ENCODE measurements at regions of chr5 and their contacts with region 1.

Region 1: DNA sequence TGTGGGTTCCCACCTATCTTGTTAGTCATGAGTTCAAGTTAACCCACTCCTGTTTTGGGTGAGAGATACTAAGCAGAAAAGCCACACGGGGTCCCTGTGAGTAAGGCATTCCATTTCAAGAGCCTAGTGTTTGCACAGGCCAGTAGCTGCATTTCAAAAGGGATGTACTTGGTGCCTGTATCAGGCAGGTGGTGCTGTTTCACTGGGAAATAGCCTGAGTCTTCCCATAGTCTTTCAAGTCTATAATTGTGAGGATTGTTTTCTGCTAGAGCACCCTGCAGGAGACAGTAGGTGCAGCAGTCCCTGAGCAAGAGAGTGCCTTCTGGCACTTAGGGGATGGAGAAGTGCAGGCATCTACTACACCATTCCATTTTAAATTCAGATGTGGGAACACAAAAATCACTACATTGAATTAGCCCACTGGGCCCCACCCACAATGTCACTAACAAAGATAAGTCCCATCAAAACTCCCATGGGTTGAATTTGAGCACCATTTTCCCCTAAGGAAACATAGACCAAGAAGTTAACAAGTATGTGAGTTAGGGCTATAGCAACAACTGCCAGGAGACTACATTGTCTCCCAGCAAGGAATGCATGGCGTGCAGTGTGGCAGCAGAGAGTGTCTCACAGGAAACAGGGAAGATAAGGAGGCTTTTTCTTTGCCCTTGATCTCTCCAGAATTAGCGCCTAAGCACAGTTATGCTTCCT is 263.2 kb downstream of the COX7C start:
- DNase-seq: peak in 7 of 10 donors; percentile 24 to 77 (median 57)
- H3K4me3 ChIP-seq: no peak overlapping the region
- H3K27ac ChIP-seq: peak overlapping the region in 1 of 59 donors; percentile 1
- H3K27me3 ChIP-seq: no peaks in the 10 kb centered on the region
- CTCF ChIP-seq: peak; percentile 64 to 94 (median 84)

Region 2: GRCh38 chr5:86596476-86596875 is 284.5 kb before region 1 on chr5:
- intact Hi-C with region 1: no loop called
- DNase-seq: no peak
- H3K4me3 ChIP-seq: no peak overlapping the region
- H3K27ac ChIP-seq: no peak overlapping the region
- H3K27me3 ChIP-seq: peaks cover 0 to 3% (median 0%) of the 10 kb centered on the region in 45 donors
- CTCF ChIP-seq: no peak

Region 3: GRCh38 chr5:86831128-86831527 is 49.8 kb before region 1 on chr5:
- intact Hi-C with region 1: no loop called
- DNase-seq: no peak
- H3K4me3 ChIP-seq: no peak overlapping the region
- H3K27ac ChIP-seq: no peak overlapping the region
- H3K27me3 ChIP-seq: no peaks in the 10 kb centered on the region
- CTCF ChIP-seq: no peak

Region 4: DNA sequence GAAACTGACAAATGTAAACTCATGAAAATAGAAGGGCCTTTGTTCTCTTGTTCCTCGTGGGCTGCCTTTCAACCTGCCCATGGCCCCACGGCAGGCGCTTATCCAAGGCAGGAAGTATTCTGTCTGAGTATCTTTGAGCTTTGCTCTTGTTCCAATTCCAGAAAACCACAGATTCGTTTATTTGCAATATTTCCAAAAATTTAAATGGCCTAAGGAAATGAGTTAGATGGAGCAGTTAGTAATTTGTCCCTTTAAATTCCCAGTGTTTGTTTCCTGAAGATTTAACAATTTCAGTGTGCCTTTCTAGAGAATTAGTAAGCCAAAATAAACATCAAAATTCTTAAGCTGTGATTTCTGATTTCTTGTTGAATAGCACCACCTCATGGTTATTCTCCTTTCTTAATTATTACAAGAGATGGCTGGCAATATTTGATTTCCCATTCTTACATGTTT is 87.4 kb after region 1 on chr5:
- intact Hi-C with region 1: loop called (anchors 1 to 5 kb)
- DNase-seq: peak in 4 of 10 donors; percentile 9 to 45 (median 34)
- H3K4me3 ChIP-seq: peak overlapping the region in 34 of 59 donors; percentile 0 to 53 (median 24)
- H3K27ac ChIP-seq: peak overlapping the region in 4 of 59 donors; percentile 14 to 65 (median 22)
- H3K27me3 ChIP-seq: no peaks in the 10 kb centered on the region
- CTCF ChIP-seq: peak; percentile 42 to 88 (median 68)

Region 5: DNA sequence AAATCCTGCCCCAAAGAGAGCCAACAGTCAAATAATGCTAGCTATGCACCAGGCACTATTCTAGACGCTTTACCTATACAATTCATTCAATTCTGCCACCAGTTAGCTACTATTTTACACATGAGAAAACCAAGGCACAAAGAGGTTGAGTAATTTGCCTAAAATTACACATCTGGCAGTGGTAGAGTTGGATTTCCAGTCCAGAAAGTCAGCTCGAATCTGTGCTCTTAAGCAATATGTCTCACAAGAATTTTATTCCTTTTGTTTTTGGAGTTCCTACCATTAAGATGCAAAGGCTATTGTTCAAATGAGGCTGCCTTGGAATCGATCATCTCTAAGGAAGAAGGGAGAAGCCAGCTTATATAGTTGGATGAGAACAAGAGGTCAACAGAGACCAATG is 129.8 kb after region 1 on chr5:
- intact Hi-C with region 1: loop called (anchors 5 to 10 kb)
- DNase-seq: no peak
- H3K4me3 ChIP-seq: no peak overlapping the region
- H3K27ac ChIP-seq: no peak overlapping the region
- H3K27me3 ChIP-seq: no peaks in the 10 kb centered on the region
- CTCF ChIP-seq: no peak

Region 6: DNA sequence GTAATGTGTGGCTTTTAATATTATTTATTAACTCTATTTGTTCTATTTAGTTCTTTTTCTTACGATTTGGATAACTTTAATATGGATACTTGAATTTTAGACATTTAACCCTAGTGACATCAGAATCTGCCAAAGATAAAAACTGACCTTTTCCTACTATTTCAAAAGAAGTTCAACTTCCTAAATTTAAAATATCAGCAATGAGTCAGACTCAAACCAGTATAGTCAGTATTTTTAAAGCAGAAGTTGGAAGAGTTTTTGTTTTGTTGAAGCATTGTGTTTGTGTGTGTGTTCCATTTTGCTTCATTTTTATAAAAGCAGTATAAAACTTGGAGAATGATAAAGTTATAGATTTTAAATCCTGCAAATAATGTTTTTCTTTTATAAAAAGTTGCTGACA is 135.0 kb after region 1 on chr5:
- intact Hi-C with region 1: loop called (anchors 5 to 10 kb)
- DNase-seq: no peak
- H3K4me3 ChIP-seq: no peak overlapping the region
- H3K27ac ChIP-seq: peak overlapping the region in 1 of 59 donors; percentile 26
- H3K27me3 ChIP-seq: no peaks in the 10 kb centered on the region
- CTCF ChIP-seq: no peak

Region 7: DNA sequence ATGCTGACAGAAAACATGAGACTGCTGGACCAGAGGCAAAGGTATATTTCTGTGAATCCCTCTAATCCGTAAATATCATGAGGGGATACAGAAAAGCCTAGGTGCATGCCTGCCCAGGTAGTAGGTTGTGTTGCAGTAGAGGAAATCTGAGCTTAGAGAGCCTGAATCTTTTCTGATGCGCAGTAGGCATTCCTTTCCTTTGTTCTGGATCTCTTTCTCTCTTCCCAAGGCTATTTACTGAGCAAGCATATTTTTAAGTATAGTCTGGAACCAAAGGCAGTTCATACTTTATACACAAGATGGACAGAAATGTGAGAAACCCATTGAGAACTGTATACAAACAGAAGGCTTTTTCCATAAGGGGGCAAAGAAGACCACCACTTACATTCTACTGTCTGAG is 1028.4 kb after region 1 on chr5:
- intact Hi-C with region 1: no loop called
- DNase-seq: no peak
- H3K4me3 ChIP-seq: no peak overlapping the region
- H3K27ac ChIP-seq: no peak overlapping the region
- H3K27me3 ChIP-seq: no peaks in the 10 kb centered on the region
- CTCF ChIP-seq: peak in 4 of 56 donors; percentile 17 to 33 (median 22)